GM12878 (cell line): ENCODE measurements at regions of chr9 and their contacts with region 1.

Region 1: GRCh38 chr9:137534256-137535117 is 15.7 kb downstream of the PNPLA7 start:
- DNase-seq: no peak
- ATAC-seq: peak; percentile 93
- H3K4me3 ChIP-seq: no peak overlapping the region
- H3K27ac ChIP-seq: no peak overlapping the region
- H3K4me1 ChIP-seq: peaks cover 19% of the 10 kb centered on the region
- H3K27me3 ChIP-seq: no peaks in the 10 kb centered on the region
- CTCF ChIP-seq: peak; percentile 57 to 68 (median 63)
- EP300 ChIP-seq: no peak
- POLR2A ChIP-seq: no peak
- RAD21 ChIP-seq: peak; percentile 38

Region 2: GRCh38 chr9:137423004-137423874 is 111.2 kb before region 1 on chr9 and contains the starts of genes EXD3 and NOXA1:
- CTCF ChIA-PET with region 1: interaction called, 7 read pairs
- POLR2A ChIA-PET with region 1: no interaction called
- RAD21 ChIA-PET with region 1: no interaction called
- SMC1A ChIA-PET with region 1: no interaction called
- in situ Hi-C with region 1: no loop called
- intact Hi-C with region 1: loop called (anchors 10 kb)
- DNase-seq: peak; percentile 48
- ATAC-seq: peak; percentile 91
- H3K4me3 ChIP-seq: peak within 1 kb of the TSS; percentile 84
- H3K27ac ChIP-seq: peak within 1 kb of the TSS; percentile 41
- H3K4me1 ChIP-seq: no peaks in the 10 kb centered on the region; the same call in 1 of the 2 replicates
- H3K27me3 ChIP-seq: no peaks in the 10 kb centered on the region; a peak in 2 of 4 replicates
- CTCF ChIP-seq: peak; percentile 64 to 82 (median 73); a peak in 5 of 6 replicates
- EP300 ChIP-seq: no peak
- POLR2A ChIP-seq: peak; percentile 70
- RAD21 ChIP-seq: peak; percentile 45
- polyA plus RNA-seq, gene EXD3: 0.21 to 0.51 TPM
- polyA plus RNA-seq, gene NOXA1: not detected

Region 3: GRCh38 chr9:137502008-137502913 is 32.2 kb before region 1 on chr9:
- CTCF ChIA-PET with region 1: no interaction called
- POLR2A ChIA-PET with region 1: no interaction called
- RAD21 ChIA-PET with region 1: no interaction called
- SMC1A ChIA-PET with region 1: no interaction called
- in situ Hi-C with region 1: no loop called
- intact Hi-C with region 1: no loop called
- DNase-seq: no peak
- ATAC-seq: no peak
- H3K4me3 ChIP-seq: no peak overlapping the region
- H3K27ac ChIP-seq: no peak overlapping the region
- H3K4me1 ChIP-seq: no peaks in the 10 kb centered on the region
- H3K27me3 ChIP-seq: no peaks in the 10 kb centered on the region
- CTCF ChIP-seq: no peak
- EP300 ChIP-seq: no peak
- POLR2A ChIP-seq: no peak
- RAD21 ChIP-seq: no peak

Region 4: DNA sequence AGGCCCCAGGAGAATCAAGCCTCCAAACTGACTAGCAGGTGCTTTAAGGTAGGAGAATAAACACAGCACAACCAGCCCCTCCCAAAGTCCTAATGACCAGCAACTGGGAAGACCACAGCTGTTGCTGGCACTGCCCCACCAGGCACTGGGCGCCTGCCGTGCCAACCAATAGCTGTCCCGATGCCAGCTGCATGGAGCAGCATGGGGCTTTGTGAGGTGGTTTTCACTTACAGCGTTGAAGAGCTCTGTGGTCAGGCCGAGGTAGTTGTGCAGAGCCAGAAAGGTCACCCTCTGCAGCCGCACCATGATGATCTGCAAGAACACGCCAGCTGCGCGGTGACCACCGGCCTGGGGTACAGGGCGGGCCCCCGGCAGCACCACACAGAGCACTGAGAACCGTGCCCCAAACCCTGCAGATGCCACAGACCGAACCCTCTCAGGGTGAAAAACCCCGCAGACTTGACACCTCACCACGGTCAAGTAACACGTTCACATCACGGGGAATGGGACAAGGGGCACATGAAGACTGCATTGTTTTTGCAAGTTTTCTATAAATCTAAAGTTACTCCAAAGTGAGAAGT is 13.0 kb before region 1 on chr9:
- CTCF ChIA-PET with region 1: interaction called, 14 read pairs
- POLR2A ChIA-PET with region 1: no interaction called
- RAD21 ChIA-PET with region 1: no interaction called
- SMC1A ChIA-PET with region 1: no interaction called
- in situ Hi-C with region 1: no loop called
- intact Hi-C with region 1: no loop called
- DNase-seq: no peak
- ATAC-seq: no peak
- H3K4me3 ChIP-seq: no peak overlapping the region
- H3K27ac ChIP-seq: no peak overlapping the region
- H3K4me1 ChIP-seq: no peaks in the 10 kb centered on the region
- H3K27me3 ChIP-seq: no peaks in the 10 kb centered on the region
- CTCF ChIP-seq: no peak
- EP300 ChIP-seq: no peak
- POLR2A ChIP-seq: no peak
- RAD21 ChIP-seq: no peak

Region 5: DNA sequence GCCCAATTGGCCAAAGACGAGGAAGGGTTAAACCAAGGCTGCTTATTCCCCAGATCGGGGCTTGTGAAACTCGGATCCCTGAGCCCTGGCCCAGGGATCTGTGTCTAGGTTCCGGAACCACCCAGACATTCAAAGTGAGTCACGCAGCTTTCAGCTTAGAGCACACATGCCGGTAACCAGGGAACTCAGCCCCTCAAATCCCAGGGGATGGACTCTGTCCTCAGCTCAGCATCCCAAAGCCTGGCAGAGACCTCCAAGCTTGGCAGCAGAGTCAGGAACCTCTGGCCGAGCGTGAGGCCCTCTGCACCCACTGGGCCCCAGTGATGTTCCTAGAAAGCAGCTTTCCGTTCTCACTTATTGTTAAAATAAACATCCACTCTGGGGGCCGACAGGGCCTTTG is 10.6 kb after region 1 on chr9:
- CTCF ChIA-PET with region 1: interaction called, 11 read pairs
- POLR2A ChIA-PET with region 1: no interaction called
- RAD21 ChIA-PET with region 1: interaction called, 3 read pairs
- SMC1A ChIA-PET with region 1: interaction called, 3 read pairs
- in situ Hi-C with region 1: no loop called
- intact Hi-C with region 1: no loop called
- DNase-seq: no peak
- ATAC-seq: no peak
- H3K4me3 ChIP-seq: no peak overlapping the region
- H3K27ac ChIP-seq: no peak overlapping the region
- H3K4me1 ChIP-seq: peaks cover 6% of the 10 kb centered on the region
- H3K27me3 ChIP-seq: no peaks in the 10 kb centered on the region; a peak in 1 of 4 replicates
- CTCF ChIP-seq: no peak
- EP300 ChIP-seq: no peak
- POLR2A ChIP-seq: no peak
- RAD21 ChIP-seq: no peak

Region 6: DNA sequence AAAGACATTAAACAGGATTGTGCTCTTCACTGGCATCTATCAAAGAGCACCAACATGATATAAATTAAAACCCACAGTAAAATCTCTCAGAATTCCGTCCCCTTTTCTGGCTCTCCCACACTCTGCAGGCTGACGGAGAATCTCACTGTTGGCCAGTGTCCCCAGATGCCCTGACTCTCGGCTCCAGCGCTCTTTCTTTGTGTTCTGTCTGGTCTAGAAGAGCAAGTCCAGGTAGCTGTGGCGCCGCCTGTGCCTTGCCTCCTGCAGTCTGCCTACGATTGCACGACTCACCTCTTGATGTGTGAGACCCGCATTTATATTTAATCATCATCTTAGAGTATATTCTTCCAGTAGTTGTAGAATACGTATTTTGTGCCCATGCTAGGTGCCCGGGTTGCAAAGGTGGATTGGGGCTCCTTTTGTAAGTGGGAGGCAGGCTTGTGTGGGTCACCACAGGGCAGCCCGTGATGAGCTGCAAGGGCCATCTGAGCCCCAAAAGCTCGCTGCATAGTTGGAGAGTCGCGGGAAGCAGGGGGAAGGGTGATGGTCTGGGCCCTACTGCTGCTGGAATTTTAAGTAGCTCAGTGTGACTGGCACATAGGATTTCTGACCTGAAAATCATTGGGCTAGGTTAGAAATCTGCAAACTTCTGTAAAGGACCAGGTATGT is 140.0 kb after region 1 on chr9:
- CTCF ChIA-PET with region 1: no interaction called
- POLR2A ChIA-PET with region 1: no interaction called
- RAD21 ChIA-PET with region 1: no interaction called
- SMC1A ChIA-PET with region 1: no interaction called
- in situ Hi-C with region 1: no loop called
- intact Hi-C with region 1: no loop called
- DNase-seq: no peak
- ATAC-seq: no peak
- H3K4me3 ChIP-seq: no peak overlapping the region
- H3K27ac ChIP-seq: no peak overlapping the region
- H3K4me1 ChIP-seq: peaks cover 23% of the 10 kb centered on the region
- H3K27me3 ChIP-seq: no peaks in the 10 kb centered on the region
- CTCF ChIP-seq: no peak
- EP300 ChIP-seq: no peak
- POLR2A ChIP-seq: no peak
- RAD21 ChIP-seq: no peak